T-cell (primary cell): ENCODE measurements at regions of chr12 and their contacts with region 1.

Region 1: GRCh38 chr12:104763168-104763805 is 194.8 kb downstream of the SLC41A2 start:
- DNase-seq: no peak
- ATAC-seq: peak in 1 of 4 experiments; percentile 17
- H3K4me3 ChIP-seq: no peak overlapping the region
- H3K4me3 Mint-ChIP-seq: no peak overlapping the region
- H3K27ac ChIP-seq: no peak overlapping the region
- H3K27ac Mint-ChIP-seq: peak overlapping the region in 1 of 2 donors; percentile 12
- H3K4me1 ChIP-seq: peaks cover 10 to 11% of the 10 kb centered on the region in 2 experiments
- H3K4me1 Mint-ChIP-seq: peaks cover 32 to 36% (median 34%) of the 10 kb centered on the region in 3 donors
- H3K27me3 ChIP-seq: no peaks in the 10 kb centered on the region
- H3K27me3 Mint-ChIP-seq: no peaks in the 10 kb centered on the region

Region 2: DNA sequence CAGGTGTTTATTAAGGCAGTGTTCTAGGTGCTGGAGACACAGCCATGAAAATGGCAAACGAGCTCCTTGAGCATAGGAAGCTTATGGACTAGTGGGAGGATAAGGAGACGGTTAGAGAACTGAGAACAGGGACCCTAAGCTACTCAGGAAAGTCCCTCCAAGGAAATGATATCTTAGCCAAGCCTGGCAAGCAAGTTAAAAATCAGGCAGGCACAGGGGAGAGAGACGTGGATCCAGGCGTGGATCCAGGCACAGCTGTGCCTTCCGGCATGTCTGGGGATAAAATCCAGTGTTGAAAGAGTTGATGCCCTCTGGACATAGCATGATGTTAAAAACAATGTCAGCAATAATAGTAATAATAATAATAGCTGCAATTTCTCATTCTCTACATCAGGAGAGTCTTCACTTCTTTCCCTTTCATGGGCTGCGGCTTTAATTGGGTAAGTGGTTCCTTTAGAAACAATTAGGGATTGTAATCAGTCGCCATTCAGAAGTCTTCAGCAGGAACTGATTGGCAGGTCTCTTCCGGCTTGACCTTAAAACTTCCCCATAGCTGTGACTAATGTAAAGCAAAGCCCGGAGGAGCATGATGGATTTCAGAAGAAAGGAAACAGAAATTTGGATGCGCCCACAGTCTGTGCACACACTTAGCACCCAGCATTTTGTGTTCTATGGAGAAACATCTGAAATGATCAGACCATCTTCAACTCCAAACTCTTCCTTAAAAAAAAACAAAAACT is 35.4 kb before region 1 on chr12:
- CTCF ChIA-PET with region 1: interaction called in 1 of 2 experiments, 10 read pairs
- POLR2A ChIA-PET with region 1: no interaction called
- DNase-seq: no peak
- ATAC-seq: no peak
- H3K4me3 ChIP-seq: no peak overlapping the region
- H3K4me3 Mint-ChIP-seq: no peak overlapping the region
- H3K27ac ChIP-seq: no peak overlapping the region
- H3K27ac Mint-ChIP-seq: peak overlapping the region in 1 of 2 donors; percentile 23
- H3K4me1 ChIP-seq: peaks cover 0 to 47% of the 10 kb centered on the region in 2 experiments
- H3K4me1 Mint-ChIP-seq: peaks cover 29 to 74% (median 56%) of the 10 kb centered on the region in 3 donors
- H3K27me3 ChIP-seq: no peaks in the 10 kb centered on the region
- H3K27me3 Mint-ChIP-seq: no peaks in the 10 kb centered on the region

Region 3: GRCh38 chr12:105040476-105040875 is 277.2 kb after region 1 on chr12:
- CTCF ChIA-PET with region 1: interaction called in 1 of 2 experiments, 15 read pairs
- POLR2A ChIA-PET with region 1: no interaction called
- DNase-seq: no peak
- ATAC-seq: no peak
- H3K4me3 ChIP-seq: no peak overlapping the region
- H3K4me3 Mint-ChIP-seq: no peak overlapping the region
- H3K27ac ChIP-seq: no peak overlapping the region
- H3K27ac Mint-ChIP-seq: no peak overlapping the region
- H3K4me1 ChIP-seq: peaks cover 8 to 10% of the 10 kb centered on the region in 2 experiments
- H3K4me1 Mint-ChIP-seq: peaks cover 18 to 26% (median 21%) of the 10 kb centered on the region in 3 donors
- H3K27me3 ChIP-seq: no peaks in the 10 kb centered on the region
- H3K27me3 Mint-ChIP-seq: no peaks in the 10 kb centered on the region